Left cardiac atrium (tissue), 4 donors: ENCODE measurements at regions of chr10 and their contacts with region 1.

Region 1: GRCh38 chr10:784403-785088 is 95.1 kb upstream of the DIP2C start:
- DNase-seq: peak; percentile 81
- ATAC-seq: peak; percentile 72 to 83

Region 2: GRCh38 chr10:516766-517165 is 267.8 kb before region 1 on chr10:
- intact Hi-C with region 1: loop called in 1 of 2 experiments (anchors 5 kb)
- DNase-seq: no peak
- ATAC-seq: no peak

Region 3: GRCh38 chr10:689433-690371 is 94.8 kb before region 1 on chr10 and contains the start of gene DIP2C:
- intact Hi-C with region 1: loop called in 1 of 2 experiments (anchors 10 kb)
- DNase-seq: peak; percentile 85
- ATAC-seq: peak; percentile 86 to 88
- total RNA-seq, gene DIP2C: 21.6 to 30.5 TPM

Region 4: GRCh38 chr10:819326-819725 is 34.8 kb after region 1 on chr10:
- intact Hi-C with region 1: no loop called
- DNase-seq: no peak
- ATAC-seq: no peak